GM13976 (cell line): ENCODE measurements at regions of chr13 and their contacts with region 1.

Region 1: GRCh38 chr13:70568571-70568970 is 460.3 kb upstream of the KLHL1 start:
- DNase-seq: peak; percentile 54
- CTCF ChIP-seq: peak; percentile 40

Region 2: DNA sequence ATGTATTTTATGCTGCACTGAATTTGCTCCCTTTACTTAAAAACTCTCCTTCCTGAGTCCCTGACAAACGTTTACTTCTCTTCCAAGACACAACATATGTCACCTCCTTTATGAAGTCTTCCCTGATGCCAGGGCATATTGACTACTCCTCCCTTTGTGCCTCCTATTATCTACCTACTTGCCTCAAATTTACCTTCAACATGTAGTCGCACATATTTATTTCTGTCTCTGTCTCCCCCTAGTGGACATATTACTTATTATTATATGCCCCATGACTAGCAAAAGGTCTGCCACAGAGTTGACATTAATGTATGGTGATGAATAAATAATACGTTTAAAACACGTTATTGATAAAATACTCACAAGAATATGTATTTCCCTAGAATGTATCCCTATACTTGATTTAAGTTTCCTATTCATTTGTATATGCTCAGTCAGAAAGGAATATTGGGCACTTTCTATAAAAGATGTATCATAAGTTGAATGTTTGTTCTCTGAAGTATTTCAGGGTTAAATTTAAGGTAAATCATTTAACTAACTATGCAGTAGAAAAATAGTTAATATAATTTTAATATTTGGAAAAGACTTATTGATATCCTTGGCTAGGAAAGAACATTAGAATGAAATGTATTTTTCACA is 711.3 kb before region 1 on chr13:
- in situ Hi-C with region 1: loop called (anchors 25 kb)
- DNase-seq: no peak
- CTCF ChIP-seq: peak; percentile 51

Region 3: GRCh38 chr13:69959041-69959440 is 609.5 kb before region 1 on chr13:
- in situ Hi-C with region 1: no loop called
- DNase-seq: no peak
- CTCF ChIP-seq: no peak